CD8-positive, alpha-beta T cell (primary cell): ENCODE measurements at regions of chr6 and their contacts with region 1.

Region 1: GRCh38 chr6:31597006-31597405 is 4.2 kb upstream of the NCR3 start:
- DNase-seq: peak in 5 of 9 experiments; percentile 47 to 86 (median 56)
- ATAC-seq: peak; percentile 83
- H3K4me3 ChIP-seq: no peak overlapping the region
- H3K4me3 Mint-ChIP-seq: peak overlapping the region; percentile 3
- H3K27ac ChIP-seq: no peak overlapping the region
- H3K27ac Mint-ChIP-seq: peak overlapping the region; percentile 79
- H3K4me1 ChIP-seq: peaks cover 53% of the 10 kb centered on the region
- H3K4me1 Mint-ChIP-seq: peaks cover 50% of the 10 kb centered on the region
- H3K27me3 ChIP-seq: no peaks in the 10 kb centered on the region
- H3K27me3 Mint-ChIP-seq: no peaks in the 10 kb centered on the region
- CTCF ChIP-seq: peak; percentile 66

Region 2: GRCh38 chr6:31396422-31397152 is 200.4 kb before region 1 on chr6:
- CTCF ChIA-PET with region 1: interaction called, 8 read pairs
- POLR2A ChIA-PET with region 1: no interaction called
- intact Hi-C with region 1: loop called in 1 of 2 experiments (anchors 2 kb)
- DNase-seq: peak; percentile 79 to 92 (median 88)
- ATAC-seq: peak; percentile 79
- H3K4me3 ChIP-seq: no peak overlapping the region
- H3K4me3 Mint-ChIP-seq: peak overlapping the region; percentile 2
- H3K27ac ChIP-seq: no peak overlapping the region
- H3K27ac Mint-ChIP-seq: no peak overlapping the region
- H3K4me1 ChIP-seq: peaks cover 17% of the 10 kb centered on the region
- H3K4me1 Mint-ChIP-seq: peaks cover 34% of the 10 kb centered on the region
- H3K27me3 ChIP-seq: no peaks in the 10 kb centered on the region
- H3K27me3 Mint-ChIP-seq: no peaks in the 10 kb centered on the region
- CTCF ChIP-seq: peak; percentile 64

Region 3: GRCh38 chr6:31580807-31581433 is 16.1 kb before region 1 on chr6:
- CTCF ChIA-PET with region 1: interaction called, 1,206 read pairs
- POLR2A ChIA-PET with region 1: interaction called, 387 read pairs
- intact Hi-C with region 1: loop called (anchors 1 kb)
- DNase-seq: peak; percentile 81 to 97 (median 90)
- ATAC-seq: peak; percentile 73
- H3K4me3 ChIP-seq: peak overlapping the region; percentile 92 to 100
- H3K4me3 Mint-ChIP-seq: peak overlapping the region; percentile 99
- H3K27ac ChIP-seq: peak overlapping the region; percentile 77 to 91
- H3K27ac Mint-ChIP-seq: peak overlapping the region; percentile 96
- H3K4me1 ChIP-seq: peaks cover 69% of the 10 kb centered on the region
- H3K4me1 Mint-ChIP-seq: peaks cover 77% of the 10 kb centered on the region
- H3K27me3 ChIP-seq: no peaks in the 10 kb centered on the region
- H3K27me3 Mint-ChIP-seq: no peaks in the 10 kb centered on the region
- CTCF ChIP-seq: peak; percentile 98

Region 4: DNA sequence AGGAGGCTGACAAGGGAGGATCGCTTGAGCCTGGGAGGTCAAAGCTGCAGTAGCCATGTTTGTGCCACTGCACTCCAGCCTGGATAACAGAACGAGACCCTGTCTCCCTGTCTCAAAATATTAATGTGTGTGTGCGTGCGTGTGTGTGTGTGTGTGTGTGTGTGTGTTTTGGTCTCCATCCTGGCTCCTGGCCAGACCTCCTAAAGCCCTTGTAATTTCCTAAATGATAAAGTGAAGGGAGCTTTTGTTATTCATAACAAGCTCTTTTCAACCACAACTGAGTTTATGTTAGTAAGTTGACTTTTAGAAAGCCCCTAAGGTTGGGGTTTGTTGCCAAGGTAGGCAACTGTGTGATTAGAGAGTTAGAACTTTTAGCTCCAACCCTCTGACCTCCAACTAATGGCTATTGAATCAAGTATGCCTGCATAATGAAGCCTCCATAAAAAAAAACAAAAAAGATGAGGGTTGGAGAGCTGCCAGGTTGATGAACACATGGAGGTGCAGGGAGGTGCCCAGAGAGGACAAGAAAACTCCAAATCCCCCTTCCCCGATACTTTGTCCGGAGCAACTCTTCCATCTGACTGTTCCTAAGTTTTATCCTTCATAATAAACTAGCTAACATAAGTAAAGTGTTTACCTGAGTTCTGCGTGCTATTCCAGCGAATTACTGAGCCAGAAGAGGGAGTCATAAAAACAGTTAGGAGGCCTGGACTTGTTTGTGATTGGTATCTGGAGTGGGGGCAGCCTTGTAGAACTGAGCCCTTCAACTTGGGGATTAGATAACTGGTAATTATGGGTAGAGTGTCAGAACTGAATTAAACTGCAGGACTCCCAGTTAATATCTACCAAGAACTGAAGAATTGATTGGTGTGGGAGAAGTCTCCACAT is 12.8 kb after region 1 on chr6:
- CTCF ChIA-PET with region 1: interaction called, 34 read pairs
- POLR2A ChIA-PET with region 1: interaction called, 4 read pairs
- intact Hi-C with region 1: no loop called
- DNase-seq: no peak
- ATAC-seq: no peak
- H3K4me3 ChIP-seq: no peak overlapping the region
- H3K4me3 Mint-ChIP-seq: no peak overlapping the region
- H3K27ac ChIP-seq: no peak overlapping the region
- H3K27ac Mint-ChIP-seq: no peak overlapping the region
- H3K4me1 ChIP-seq: peaks cover 6% of the 10 kb centered on the region
- H3K4me1 Mint-ChIP-seq: peaks cover 8% of the 10 kb centered on the region
- H3K27me3 ChIP-seq: no peaks in the 10 kb centered on the region
- H3K27me3 Mint-ChIP-seq: no peaks in the 10 kb centered on the region
- CTCF ChIP-seq: no peak

Region 5: DNA sequence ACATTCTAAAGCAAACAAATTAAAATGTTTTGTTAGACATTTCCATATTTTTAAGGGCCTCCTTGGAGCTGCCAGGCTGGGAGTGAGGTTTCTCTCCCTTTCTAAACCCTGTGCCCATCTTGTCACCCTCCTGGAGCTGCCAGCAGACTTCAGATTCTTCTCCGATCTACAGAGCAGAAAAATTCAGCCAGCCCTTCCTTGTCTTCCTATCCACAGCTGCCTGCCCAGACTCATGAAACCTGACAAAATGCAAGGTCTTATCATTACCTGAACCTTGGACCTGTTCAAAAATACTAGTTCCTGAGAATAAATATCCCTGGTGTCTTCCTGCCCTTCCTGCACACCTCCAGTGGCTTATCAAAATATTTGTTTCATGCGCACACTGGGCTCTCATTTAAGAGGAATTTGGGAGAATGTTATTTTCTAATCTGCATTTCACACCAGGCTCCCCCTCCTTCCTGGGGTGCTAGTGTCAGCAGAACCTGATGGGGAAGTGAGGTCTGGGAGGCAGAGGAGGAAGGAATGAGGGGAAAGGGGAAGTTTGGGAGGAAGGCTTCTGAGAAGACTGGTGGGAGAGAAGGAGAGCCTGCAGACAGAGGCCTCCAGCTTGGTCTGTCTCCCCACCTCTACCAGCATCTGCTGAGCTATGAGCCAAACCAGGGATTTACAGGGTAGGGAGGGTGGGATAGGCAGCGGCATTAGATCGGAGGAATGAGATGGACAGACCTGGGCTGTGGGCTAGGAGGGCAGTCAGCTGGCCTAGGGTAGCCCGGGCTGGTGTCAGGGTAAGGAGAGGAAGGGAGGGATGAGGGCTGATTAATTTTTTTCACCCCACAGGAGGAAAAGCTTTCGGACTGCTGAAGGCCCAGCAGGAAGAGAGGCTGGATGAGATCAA is 17.9 kb after region 1 on chr6 and contains the start of gene AIF1:
- CTCF ChIA-PET with region 1: interaction called, 34 read pairs
- POLR2A ChIA-PET with region 1: interaction called, 10 read pairs
- intact Hi-C with region 1: no loop called
- DNase-seq: no peak
- ATAC-seq: no peak
- H3K4me3 ChIP-seq: peak within 1 kb of the TSS; percentile 31 to 64
- H3K4me3 Mint-ChIP-seq: peak within 1 kb of the TSS; percentile 86
- H3K27ac ChIP-seq: peak within 1 kb of the TSS; percentile 42 to 54
- H3K27ac Mint-ChIP-seq: peak within 1 kb of the TSS; percentile 90
- H3K4me1 ChIP-seq: peaks cover 33% of the 10 kb centered on the region
- H3K4me1 Mint-ChIP-seq: peaks cover 42% of the 10 kb centered on the region
- H3K27me3 ChIP-seq: no peaks in the 10 kb centered on the region
- H3K27me3 Mint-ChIP-seq: no peaks in the 10 kb centered on the region
- CTCF ChIP-seq: no peak
- total RNA-seq, gene AIF1: 71.2 to 76.5 TPM